ENCODE measurements at regions of chr15 and their contacts with region 1.

Region 1: GRCh38 chr15:57595011-57595866 is 3.5 kb downstream of the MYZAP start:
- DNase-seq: peak; percentile 45
- H3K4me3 ChIP-seq: no peak overlapping the region
- H3K27ac ChIP-seq: peak overlapping the region in 1 of 2 experiments; percentile 22; a peak in 1 of 4 replicates
- H3K4me1 ChIP-seq: peaks cover 0 to 14% of the 10 kb centered on the region in 2 experiments; a peak in 2 of 4 replicates
- H3K27me3 ChIP-seq: peaks cover 17% of the 10 kb centered on the region; the same call in 1 of the 2 replicates
- CTCF ChIP-seq: no peak
- EP300 ChIP-seq: peak in 1 of 2 experiments; percentile 59; a peak in 1 of 4 replicates
- RAD21 ChIP-seq: no peak

Region 2: GRCh38 chr15:57245130-57245529 is 350.1 kb before region 1 on chr15:
- CTCF ChIA-PET with region 1: no interaction called
- POLR2A ChIA-PET with region 1: no interaction called
- DNase-seq: no peak
- H3K4me3 ChIP-seq: no peak overlapping the region
- H3K27ac ChIP-seq: no peak overlapping the region
- H3K4me1 ChIP-seq: peaks cover 5 to 14% of the 10 kb centered on the region in 2 experiments; a peak in 3 of 4 replicates
- H3K27me3 ChIP-seq: no peaks in the 10 kb centered on the region
- CTCF ChIP-seq: no peak
- EP300 ChIP-seq: no peak
- RAD21 ChIP-seq: no peak

Region 3: DNA sequence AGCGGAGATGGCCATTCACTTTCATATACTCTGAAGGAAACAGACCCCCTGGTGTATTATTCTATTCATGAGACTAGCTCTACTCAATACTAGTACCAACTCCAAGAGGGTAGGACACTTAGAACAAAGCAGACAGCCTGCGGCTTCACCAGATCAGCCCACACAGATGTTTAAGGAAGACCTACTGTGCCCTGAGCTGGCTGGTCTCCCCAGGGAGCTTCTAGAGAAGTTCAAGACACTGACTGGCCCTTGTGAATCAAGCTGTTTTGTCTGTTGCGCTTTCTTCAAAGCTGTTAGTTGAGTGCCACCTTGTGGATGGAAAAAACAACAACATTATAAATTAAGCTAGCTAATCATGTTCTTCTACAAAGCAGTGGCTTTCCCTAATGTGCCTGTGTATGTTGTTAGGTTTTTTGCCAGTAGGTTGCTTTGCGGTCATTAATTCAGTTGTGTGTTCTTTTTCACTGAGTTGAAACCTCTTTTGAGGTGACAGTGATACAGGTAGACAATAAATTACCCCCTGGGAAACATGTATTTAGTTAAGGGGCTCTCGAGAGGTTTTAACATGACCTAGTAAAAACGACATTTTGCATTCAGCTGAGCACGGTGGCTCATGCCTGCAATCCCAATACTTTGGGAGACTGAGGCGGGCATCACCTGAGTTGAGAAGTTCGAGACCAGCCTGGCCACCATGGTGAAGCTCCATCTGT is 67.7 kb before region 1 on chr15:
- CTCF ChIA-PET with region 1: no interaction called
- POLR2A ChIA-PET with region 1: no interaction called
- DNase-seq: peak; percentile 51
- H3K4me3 ChIP-seq: no peak overlapping the region
- H3K27ac ChIP-seq: no peak overlapping the region
- H3K4me1 ChIP-seq: peaks cover 0 to 10% of the 10 kb centered on the region in 2 experiments; a peak in 1 of 4 replicates
- H3K27me3 ChIP-seq: no peaks in the 10 kb centered on the region
- CTCF ChIP-seq: peak; percentile 71
- EP300 ChIP-seq: no peak
- RAD21 ChIP-seq: peak; percentile 95

Region 4: GRCh38 chr15:57611938-57612337 is 16.7 kb after region 1 on chr15:
- CTCF ChIA-PET with region 1: interaction called, 10 read pairs
- POLR2A ChIA-PET with region 1: no interaction called
- DNase-seq: peak; percentile 19
- H3K4me3 ChIP-seq: no peak overlapping the region
- H3K27ac ChIP-seq: no peak overlapping the region
- H3K4me1 ChIP-seq: peaks cover 0 to 4% of the 10 kb centered on the region in 2 experiments; a peak in 1 of 4 replicates
- H3K27me3 ChIP-seq: no peaks in the 10 kb centered on the region
- CTCF ChIP-seq: peak; percentile 28
- EP300 ChIP-seq: no peak
- RAD21 ChIP-seq: peak; percentile 65

Measured in SK-N-SH (cell line).